Activated CD4-positive, alpha-beta memory T cell treated with anti-CD3 and anti-CD28 coated beads for 36 hours (primary cell): ENCODE measurements at regions of chrX and their contacts with region 1.

Region 1: DNA sequence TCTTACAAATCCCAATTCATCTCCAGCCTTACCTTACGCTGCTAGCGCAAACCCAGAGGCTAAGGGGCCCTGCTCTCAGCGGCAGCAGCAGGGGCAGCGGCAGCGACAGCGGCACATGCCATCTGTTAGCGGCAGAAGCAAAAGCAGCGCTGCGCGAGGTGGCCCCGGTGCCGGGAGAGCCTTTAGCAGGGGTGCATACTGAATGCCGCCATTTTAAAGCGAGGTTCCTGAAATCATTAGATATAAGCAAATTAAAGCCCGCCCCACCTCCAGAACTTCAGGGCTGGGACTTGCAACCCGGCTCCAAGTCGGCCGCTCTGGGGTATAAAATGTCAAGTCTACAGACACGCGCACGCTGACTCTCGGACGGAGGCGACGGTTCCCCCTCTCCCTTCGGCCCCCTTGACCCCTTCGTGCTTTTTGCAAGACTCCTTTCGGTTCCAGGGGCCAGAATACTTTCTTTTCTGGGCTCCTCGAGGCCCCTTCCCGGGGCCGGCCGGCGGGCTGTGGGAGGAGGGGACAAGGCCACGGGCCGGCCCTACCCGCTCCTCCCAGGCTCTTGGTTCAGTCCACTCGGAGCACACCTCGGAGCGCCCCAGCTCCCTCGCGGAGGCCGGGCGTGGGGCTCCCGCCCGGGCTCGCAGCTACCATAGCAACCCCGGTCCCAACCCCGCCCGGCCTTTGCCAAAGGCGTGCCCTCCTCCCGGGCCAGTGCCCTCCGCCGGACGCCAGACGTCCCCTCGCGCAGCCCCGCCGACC is at the start of gene MBNL3:
- DNase-seq: peak; percentile 68
- H3K4me3 Mint-ChIP-seq: peak within 1 kb of the TSS; percentile 88
- H3K27ac Mint-ChIP-seq: peak within 1 kb of the TSS; percentile 91
- H3K4me1 Mint-ChIP-seq: peaks cover 38% of the 10 kb centered on the region
- H3K27me3 Mint-ChIP-seq: no peaks in the 10 kb centered on the region
- total RNA-seq, gene MBNL3: 13.7 to 14.7 TPM

Region 2: GRCh38 chrX:130933358-130933757 is 1555.6 kb before region 1 on chrX:
- CTCF ChIA-PET with region 1: no interaction called
- POLR2A ChIA-PET with region 1: no interaction called
- intact Hi-C with region 1: no loop called
- DNase-seq: no peak
- H3K4me3 Mint-ChIP-seq: no peak overlapping the region
- H3K27ac Mint-ChIP-seq: no peak overlapping the region
- H3K4me1 Mint-ChIP-seq: no peaks in the 10 kb centered on the region
- H3K27me3 Mint-ChIP-seq: peaks cover under 1% of the 10 kb centered on the region

Region 3: GRCh38 chrX:132367984-132368756 is 120.8 kb before region 1 on chrX:
- CTCF ChIA-PET with region 1: no interaction called
- POLR2A ChIA-PET with region 1: no interaction called
- intact Hi-C with region 1: no loop called
- DNase-seq: no peak
- H3K4me3 Mint-ChIP-seq: no peak overlapping the region
- H3K27ac Mint-ChIP-seq: no peak overlapping the region
- H3K4me1 Mint-ChIP-seq: peaks cover 5% of the 10 kb centered on the region
- H3K27me3 Mint-ChIP-seq: no peaks in the 10 kb centered on the region

Region 4: DNA sequence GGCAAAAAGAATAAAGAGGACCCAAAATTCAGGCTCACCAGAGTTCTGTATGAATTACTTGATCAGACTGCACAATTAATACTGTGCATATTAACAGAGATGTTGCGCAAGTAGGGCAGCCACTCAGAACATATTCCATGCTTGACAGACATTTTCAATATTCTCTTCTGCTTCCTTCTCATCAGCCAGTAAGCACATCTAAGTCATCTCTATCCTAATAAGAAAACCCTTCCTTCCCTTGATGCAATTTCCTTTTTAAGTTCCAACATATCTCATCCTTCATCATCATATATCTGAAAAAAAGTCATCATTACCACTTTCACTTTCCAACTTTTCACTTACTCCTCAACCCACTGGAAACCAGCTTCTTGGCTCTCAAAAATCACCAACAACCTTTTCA is 14.5 kb before region 1 on chrX:
- CTCF ChIA-PET with region 1: no interaction called
- POLR2A ChIA-PET with region 1: interaction called, 3 read pairs
- intact Hi-C with region 1: loop called (anchors 2 kb)
- DNase-seq: no peak
- H3K4me3 Mint-ChIP-seq: no peak overlapping the region
- H3K27ac Mint-ChIP-seq: no peak overlapping the region
- H3K4me1 Mint-ChIP-seq: peaks cover 22% of the 10 kb centered on the region
- H3K27me3 Mint-ChIP-seq: no peaks in the 10 kb centered on the region

Region 5: GRCh38 chrX:132622130-132622529 is 133.1 kb after region 1 on chrX:
- CTCF ChIA-PET with region 1: no interaction called
- POLR2A ChIA-PET with region 1: no interaction called
- intact Hi-C with region 1: loop called (anchors 5 kb)
- DNase-seq: peak; percentile 78
- H3K4me3 Mint-ChIP-seq: no peak overlapping the region
- H3K27ac Mint-ChIP-seq: no peak overlapping the region
- H3K4me1 Mint-ChIP-seq: peaks cover 3% of the 10 kb centered on the region
- H3K27me3 Mint-ChIP-seq: no peaks in the 10 kb centered on the region